PC-9 (cell line): ENCODE measurements at regions of chr3 and their contacts with region 1.

Region 1: DNA sequence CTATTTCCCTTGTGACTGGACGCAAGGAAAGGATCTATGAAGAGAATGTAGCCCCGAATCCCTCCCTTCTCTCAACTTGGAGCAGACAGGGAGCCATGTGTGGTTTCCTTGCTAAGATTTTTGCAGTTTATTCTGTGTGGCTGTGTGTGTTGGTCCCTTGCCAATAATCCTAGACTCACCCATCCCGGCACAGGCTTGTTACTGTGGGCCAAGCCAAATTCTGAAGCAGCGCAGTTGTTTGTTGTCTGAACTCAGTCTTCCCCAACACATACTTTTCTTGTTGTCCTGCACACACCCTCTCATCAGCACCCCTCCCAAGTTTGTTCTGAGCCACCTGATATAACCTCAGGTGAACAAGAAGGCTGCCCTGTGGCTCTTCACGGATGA is 193.3 kb upstream of the CTDSPL start:
- DNase-seq: no peak
- H3K4me3 ChIP-seq: no peak overlapping the region
- H3K27ac ChIP-seq: no peak overlapping the region
- H3K4me1 ChIP-seq: no peaks in the 10 kb centered on the region
- H3K27me3 ChIP-seq: peaks cover 57% of the 10 kb centered on the region
- CTCF ChIP-seq: no peak

Region 2: GRCh38 chr3:37443363-37444035 is 224.9 kb before region 1 on chr3:
- CTCF ChIA-PET with region 1: no interaction called
- POLR2A ChIA-PET with region 1: no interaction called
- intact Hi-C with region 1: no loop called
- DNase-seq: no peak
- H3K4me3 ChIP-seq: no peak overlapping the region
- H3K27ac ChIP-seq: no peak overlapping the region
- H3K4me1 ChIP-seq: no peaks in the 10 kb centered on the region
- H3K27me3 ChIP-seq: peaks cover 39% of the 10 kb centered on the region
- CTCF ChIP-seq: no peak

Region 3: GRCh38 chr3:37680401-37680800 is 12.0 kb after region 1 on chr3:
- CTCF ChIA-PET with region 1: no interaction called
- POLR2A ChIA-PET with region 1: no interaction called
- intact Hi-C with region 1: loop called (anchors 1 kb)
- DNase-seq: no peak
- H3K4me3 ChIP-seq: no peak overlapping the region
- H3K27ac ChIP-seq: no peak overlapping the region
- H3K4me1 ChIP-seq: no peaks in the 10 kb centered on the region
- H3K27me3 ChIP-seq: peaks cover 56% of the 10 kb centered on the region
- CTCF ChIP-seq: no peak